ENCODE measurements at regions of chr15 and their contacts with region 1.

Region 1: DNA sequence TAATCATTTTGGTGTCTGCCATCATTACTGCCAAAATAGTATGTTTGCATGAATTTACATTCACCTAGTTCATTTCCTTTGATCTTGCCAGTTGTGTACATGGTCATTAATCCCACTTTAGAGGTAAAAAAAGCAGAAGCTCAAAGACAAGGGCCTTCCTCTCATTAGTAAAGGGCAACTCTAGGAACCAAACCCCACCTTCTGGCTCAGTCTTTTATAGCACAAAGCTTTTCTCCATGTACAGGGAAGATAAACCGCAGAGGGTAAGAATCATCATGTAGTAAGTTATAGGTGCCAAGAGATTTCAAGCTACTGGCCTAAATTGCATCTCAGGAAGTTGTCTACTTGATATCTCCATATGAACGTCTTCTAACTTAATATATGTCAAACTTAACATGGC is 19.3 kb upstream of the SPG21 start:
- DNase-seq: no peak
- H3K4me3 ChIP-seq: no peak overlapping the region
- H3K27ac ChIP-seq: no peak overlapping the region
- H3K4me1 ChIP-seq: no peaks in the 10 kb centered on the region
- H3K27me3 ChIP-seq: no peaks in the 10 kb centered on the region
- CTCF ChIP-seq: no peak
- EP300 ChIP-seq: no peak
- POLR2A ChIP-seq: no peak

Region 2: DNA sequence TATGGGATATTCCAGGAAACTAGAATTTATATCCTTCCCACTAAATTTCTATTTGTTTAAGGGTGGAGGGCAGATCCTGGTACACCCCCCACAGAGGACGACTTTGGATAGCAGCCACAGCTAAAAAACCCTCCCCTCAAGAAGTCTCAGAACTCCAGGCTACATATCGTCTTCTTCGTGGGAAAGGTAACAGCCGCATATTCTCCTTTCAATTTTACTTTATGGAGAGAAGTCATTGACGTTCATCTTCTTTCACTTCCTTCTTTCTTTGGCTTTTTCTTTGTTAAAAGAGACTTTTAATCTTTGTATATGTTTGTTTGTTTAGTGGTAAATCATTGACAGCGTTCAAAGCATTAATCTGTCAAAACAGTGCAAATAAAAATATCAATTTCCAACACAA is 585.0 kb before region 1 on chr15:
- in situ Hi-C with region 1: loop called in 1 of 4 experiments (anchors 25 kb)
- intact Hi-C with region 1: no loop called
- DNase-seq: no peak
- H3K4me3 ChIP-seq: no peak overlapping the region
- H3K27ac ChIP-seq: no peak overlapping the region
- H3K4me1 ChIP-seq: peaks cover 0 to 3% (median 0%) of the 10 kb centered on the region in 4 donors
- H3K27me3 ChIP-seq: no peaks in the 10 kb centered on the region
- CTCF ChIP-seq: no peak
- EP300 ChIP-seq: no peak
- POLR2A ChIP-seq: no peak

Region 3: DNA sequence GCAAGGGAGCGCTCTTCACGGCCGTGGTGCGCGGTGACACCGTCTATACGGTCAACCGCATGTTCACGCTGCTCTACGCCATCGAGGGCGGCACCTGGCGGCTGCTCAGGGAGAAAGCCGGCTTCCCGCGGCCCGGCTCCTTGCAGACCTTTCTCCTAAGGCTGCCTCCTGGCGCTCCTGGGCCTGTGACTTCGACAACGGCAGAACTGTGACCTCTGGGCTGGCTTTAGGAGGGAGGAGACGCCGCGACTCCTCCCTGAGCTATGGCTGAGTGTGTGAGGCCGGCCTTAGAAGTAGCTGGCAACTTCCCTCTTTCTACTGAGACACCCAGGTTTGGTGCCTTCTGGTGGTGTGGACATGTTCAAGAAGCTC is 69.0 kb after region 1 on chr15:
- in situ Hi-C with region 1: no loop called
- intact Hi-C with region 1: no loop called
- DNase-seq: peak; percentile 89
- H3K4me3 ChIP-seq: no peak overlapping the region
- H3K27ac ChIP-seq: peak overlapping the region in 1 of 4 donors; percentile 27
- H3K4me1 ChIP-seq: peaks cover 8 to 27% (median 22%) of the 10 kb centered on the region in 4 donors
- H3K27me3 ChIP-seq: no peaks in the 10 kb centered on the region
- CTCF ChIP-seq: peak; percentile 56 to 83 (median 70)
- EP300 ChIP-seq: no peak
- POLR2A ChIP-seq: no peak

Measured in transverse colon (tissue), 4 donors.